WTC11 (cell line): ENCODE measurements at regions of chr20 and their contacts with region 1.

Region 1: DNA sequence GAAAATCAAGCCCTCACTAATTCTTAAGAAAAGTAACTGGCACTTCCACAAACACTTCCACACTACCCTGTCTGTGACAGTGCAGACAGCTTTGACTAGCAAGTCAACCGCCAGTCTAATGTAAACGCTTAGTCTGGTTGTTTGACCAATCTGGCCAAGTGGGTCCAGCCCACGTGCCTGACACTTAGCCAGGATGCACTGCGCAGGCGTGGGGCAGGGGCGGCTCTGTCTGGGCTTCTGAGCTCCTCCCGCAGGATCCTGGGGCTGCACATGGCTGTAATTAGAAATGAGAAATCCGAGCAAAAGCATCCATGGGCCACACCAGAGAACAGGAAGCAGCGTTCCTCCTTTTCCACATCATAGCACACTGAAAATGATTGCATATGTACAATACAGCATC is 424.1 kb downstream of the FOXA2 start:
- DNase-seq: no peak
- ATAC-seq: no peak
- H3K4me3 Mint-ChIP-seq: no peak overlapping the region
- H3K27ac Mint-ChIP-seq: no peak overlapping the region
- H3K4me1 Mint-ChIP-seq: peaks cover 4% of the 10 kb centered on the region; the same call in 1 of the 2 replicates
- H3K27me3 Mint-ChIP-seq: no peaks in the 10 kb centered on the region
- CTCF ChIP-seq: no peak

Region 2: GRCh38 chr20:22180244-22180643 is 20.0 kb after region 1 on chr20:
- CTCF ChIA-PET with region 1: interaction called, 14 read pairs
- POLR2A ChIA-PET with region 1: no interaction called
- DNase-seq: peak; percentile 62
- ATAC-seq: peak; percentile 56; the same call in 1 of the 2 replicates
- H3K4me3 Mint-ChIP-seq: no peak overlapping the region
- H3K27ac Mint-ChIP-seq: no peak overlapping the region
- H3K4me1 Mint-ChIP-seq: no peaks in the 10 kb centered on the region
- H3K27me3 Mint-ChIP-seq: no peaks in the 10 kb centered on the region; the same call in 1 of the 2 replicates
- CTCF ChIP-seq: peak; percentile 66; the same call in 1 of the 2 replicates

Region 3: DNA sequence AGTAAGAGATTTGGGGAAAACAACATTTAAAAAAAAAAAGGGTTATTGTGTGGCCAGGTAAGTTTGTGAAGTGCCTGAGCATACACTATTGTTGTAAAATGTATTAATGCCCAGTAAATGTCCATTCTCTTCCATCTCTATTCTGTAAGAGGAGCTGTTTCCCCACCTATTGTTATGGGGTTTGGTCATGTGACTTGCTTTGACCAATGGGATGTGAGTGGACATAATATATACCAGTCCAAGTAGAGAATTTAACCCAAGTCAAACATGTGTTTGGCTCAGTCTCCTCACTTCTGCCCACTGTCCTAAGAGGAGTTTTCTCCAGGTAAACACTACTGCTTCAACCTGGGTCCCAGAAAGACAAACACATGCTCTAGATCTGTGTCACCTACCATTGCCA is 47.0 kb after region 1 on chr20:
- CTCF ChIA-PET with region 1: no interaction called
- POLR2A ChIA-PET with region 1: no interaction called
- DNase-seq: no peak
- ATAC-seq: no peak
- H3K4me3 Mint-ChIP-seq: no peak overlapping the region
- H3K27ac Mint-ChIP-seq: no peak overlapping the region
- H3K4me1 Mint-ChIP-seq: peaks cover 6% of the 10 kb centered on the region
- H3K27me3 Mint-ChIP-seq: no peaks in the 10 kb centered on the region
- CTCF ChIP-seq: no peak